Panc1 (cell line): ENCODE measurements at regions of chrX and their contacts with region 1.

Region 1: GRCh38 chrX:138745196-138745595 is 33.7 kb upstream of the FGF13 start:
- DNase-seq: no peak
- ATAC-seq: peak; percentile 77
- H3K4me3 ChIP-seq: no peak overlapping the region
- H3K27ac ChIP-seq: no peak overlapping the region
- H3K4me1 ChIP-seq: no peaks in the 10 kb centered on the region
- H3K27me3 ChIP-seq: 0 out of 2 replicates have a peak, but pooled peaks cover 2% of the 10 kb centered on the region
- CTCF ChIP-seq: peak; percentile 75; the same call in 1 of the 2 replicates

Region 2: DNA sequence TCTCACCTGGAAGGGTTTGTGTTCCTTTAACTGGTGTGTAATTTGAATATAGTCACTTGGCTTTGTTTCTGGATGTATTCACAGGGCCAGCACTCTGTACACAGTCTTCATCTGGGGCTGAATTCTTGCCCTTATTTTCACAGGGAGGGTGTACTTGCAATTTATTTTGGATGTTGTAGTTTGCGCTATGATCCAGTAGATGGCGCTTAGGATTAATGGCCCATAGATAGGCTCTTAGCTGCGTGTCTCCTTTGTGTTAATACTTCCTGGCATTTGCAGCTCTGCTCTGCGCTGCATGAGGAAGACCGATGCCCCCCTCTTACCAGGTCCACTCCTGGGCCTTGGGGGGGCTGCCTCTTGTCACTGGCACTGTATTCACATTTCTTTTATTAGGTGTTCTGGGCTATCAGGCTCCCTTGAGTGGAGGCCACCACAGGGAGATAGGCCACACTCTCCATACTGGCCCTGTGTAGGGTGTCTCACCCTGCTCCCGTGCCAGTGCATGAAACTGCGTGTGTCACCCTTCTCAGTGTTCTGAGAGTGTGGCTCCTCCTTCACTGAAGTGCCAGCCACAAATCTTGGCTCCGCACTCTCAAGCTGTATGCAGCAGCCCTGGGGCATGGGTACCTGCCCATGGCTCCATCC is 617.0 kb before region 1 on chrX:
- CTCF ChIA-PET with region 1: no interaction called
- POLR2A ChIA-PET with region 1: no interaction called
- in situ Hi-C with region 1: no loop called
- intact Hi-C with region 1: loop called (anchors 10 kb)
- DNase-seq: peak; percentile 18
- ATAC-seq: peak; percentile 78
- H3K4me3 ChIP-seq: no peak overlapping the region
- H3K27ac ChIP-seq: no peak overlapping the region
- H3K4me1 ChIP-seq: no peaks in the 10 kb centered on the region
- H3K27me3 ChIP-seq: no peaks in the 10 kb centered on the region
- CTCF ChIP-seq: peak; percentile 82

Region 3: GRCh38 chrX:138191998-138192397 is 553.2 kb before region 1 on chrX:
- CTCF ChIA-PET with region 1: no interaction called
- POLR2A ChIA-PET with region 1: no interaction called
- in situ Hi-C with region 1: no loop called
- intact Hi-C with region 1: loop called (anchors 1 kb)
- DNase-seq: no peak
- ATAC-seq: no peak
- H3K4me3 ChIP-seq: no peak overlapping the region
- H3K27ac ChIP-seq: no peak overlapping the region
- H3K4me1 ChIP-seq: no peaks in the 10 kb centered on the region
- H3K27me3 ChIP-seq: no peaks in the 10 kb centered on the region
- CTCF ChIP-seq: peak; percentile 73

Region 4: GRCh38 chrX:138298259-138298658 is 446.9 kb before region 1 on chrX:
- CTCF ChIA-PET with region 1: no interaction called
- POLR2A ChIA-PET with region 1: no interaction called
- in situ Hi-C with region 1: no loop called
- intact Hi-C with region 1: loop called (anchors 5 kb)
- DNase-seq: no peak
- ATAC-seq: no peak
- H3K4me3 ChIP-seq: no peak overlapping the region
- H3K27ac ChIP-seq: no peak overlapping the region
- H3K4me1 ChIP-seq: no peaks in the 10 kb centered on the region
- H3K27me3 ChIP-seq: no peaks in the 10 kb centered on the region
- CTCF ChIP-seq: peak; percentile 20; the same call in 1 of the 2 replicates